ENCODE measurements at regions of chr4 and their contacts with region 1.

Region 1: GRCh38 chr4:89586864-89587263 is 250.1 kb downstream of the SNCA start:
- DNase-seq: peak in 1 of 5 donors; percentile 0
- H3K4me3 ChIP-seq: no peak overlapping the region
- H3K4me3 Mint-ChIP-seq: no peak overlapping the region
- H3K27ac ChIP-seq: no peak overlapping the region
- H3K27ac Mint-ChIP-seq: no peak overlapping the region
- H3K4me1 ChIP-seq: no peaks in the 10 kb centered on the region
- H3K4me1 Mint-ChIP-seq: no peaks in the 10 kb centered on the region
- H3K27me3 ChIP-seq: peaks cover 5% of the 10 kb centered on the region
- H3K27me3 Mint-ChIP-seq: peaks cover 4 to 7% of the 10 kb centered on the region in 2 donors

Region 2: GRCh38 chr4:89175611-89176010 is 411.3 kb before region 1 on chr4:
- CTCF ChIA-PET with region 1: no interaction called
- POLR2A ChIA-PET with region 1: no interaction called
- intact Hi-C with region 1: no loop called
- DNase-seq: no peak
- H3K4me3 ChIP-seq: no peak overlapping the region
- H3K4me3 Mint-ChIP-seq: no peak overlapping the region
- H3K27ac ChIP-seq: no peak overlapping the region
- H3K27ac Mint-ChIP-seq: no peak overlapping the region
- H3K4me1 ChIP-seq: no peaks in the 10 kb centered on the region
- H3K4me1 Mint-ChIP-seq: no peaks in the 10 kb centered on the region
- H3K27me3 ChIP-seq: no peaks in the 10 kb centered on the region
- H3K27me3 Mint-ChIP-seq: peaks cover 3% of the 10 kb centered on the region in 2 donors

Region 3: DNA sequence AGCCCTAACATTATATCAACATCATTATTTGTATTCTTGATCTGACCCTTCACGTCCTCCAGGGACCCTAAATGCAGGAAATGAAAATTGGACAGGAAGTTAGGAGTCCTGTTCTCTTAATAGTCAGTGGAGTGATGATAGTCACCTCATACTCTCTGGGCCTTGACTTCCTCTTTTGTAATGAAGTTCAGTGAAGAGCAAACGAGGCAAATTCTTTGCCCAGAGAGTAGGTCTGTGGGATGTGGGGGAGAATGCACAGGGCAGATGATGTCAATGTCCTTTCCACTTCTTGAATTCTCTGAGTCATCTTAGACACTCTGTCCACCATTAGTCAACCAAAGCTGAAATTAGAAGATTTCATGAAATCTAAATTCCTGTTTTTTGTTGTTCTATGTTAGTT is 262.2 kb before region 1 on chr4:
- CTCF ChIA-PET with region 1: no interaction called
- POLR2A ChIA-PET with region 1: no interaction called
- intact Hi-C with region 1: no loop called
- DNase-seq: no peak
- H3K4me3 ChIP-seq: no peak overlapping the region
- H3K4me3 Mint-ChIP-seq: no peak overlapping the region
- H3K27ac ChIP-seq: no peak overlapping the region
- H3K27ac Mint-ChIP-seq: peak overlapping the region in 2 of 7 donors; percentile 4 to 17
- H3K4me1 ChIP-seq: no peaks in the 10 kb centered on the region
- H3K4me1 Mint-ChIP-seq: peaks cover 3 to 11% (median 6%) of the 10 kb centered on the region in 4 donors
- H3K27me3 ChIP-seq: no peaks in the 10 kb centered on the region
- H3K27me3 Mint-ChIP-seq: no peaks in the 10 kb centered on the region

Region 4: GRCh38 chr4:89894649-89895550 is 308.0 kb after region 1 on chr4 and contains the start of gene MMRN1:
- CTCF ChIA-PET with region 1: no interaction called
- POLR2A ChIA-PET with region 1: no interaction called
- intact Hi-C with region 1: loop called (anchors 2 kb)
- DNase-seq: peak in 3 of 5 donors; percentile 11 to 22 (median 14)
- H3K4me3 ChIP-seq: peak within 1 kb of the TSS; percentile 8 to 11
- H3K4me3 Mint-ChIP-seq: peak within 1 kb of the TSS; percentile 39 to 90 (median 69)
- H3K27ac ChIP-seq: peak within 1 kb of the TSS; percentile 13
- H3K27ac Mint-ChIP-seq: peak within 1 kb of the TSS; percentile 14 to 90 (median 54)
- H3K4me1 ChIP-seq: peaks cover 24% of the 10 kb centered on the region
- H3K4me1 Mint-ChIP-seq: peaks cover 9 to 23% (median 18%) of the 10 kb centered on the region in 4 donors
- H3K27me3 ChIP-seq: no peaks in the 10 kb centered on the region
- H3K27me3 Mint-ChIP-seq: no peaks in the 10 kb centered on the region
- total RNA-seq, gene MMRN1: 0.52 to 0.55 TPM

Measured in CD4-positive, alpha-beta memory T cell (primary cell).